HepG2 (cell line): ENCODE measurements at regions of chr4 and their contacts with region 1.

Region 1: DNA sequence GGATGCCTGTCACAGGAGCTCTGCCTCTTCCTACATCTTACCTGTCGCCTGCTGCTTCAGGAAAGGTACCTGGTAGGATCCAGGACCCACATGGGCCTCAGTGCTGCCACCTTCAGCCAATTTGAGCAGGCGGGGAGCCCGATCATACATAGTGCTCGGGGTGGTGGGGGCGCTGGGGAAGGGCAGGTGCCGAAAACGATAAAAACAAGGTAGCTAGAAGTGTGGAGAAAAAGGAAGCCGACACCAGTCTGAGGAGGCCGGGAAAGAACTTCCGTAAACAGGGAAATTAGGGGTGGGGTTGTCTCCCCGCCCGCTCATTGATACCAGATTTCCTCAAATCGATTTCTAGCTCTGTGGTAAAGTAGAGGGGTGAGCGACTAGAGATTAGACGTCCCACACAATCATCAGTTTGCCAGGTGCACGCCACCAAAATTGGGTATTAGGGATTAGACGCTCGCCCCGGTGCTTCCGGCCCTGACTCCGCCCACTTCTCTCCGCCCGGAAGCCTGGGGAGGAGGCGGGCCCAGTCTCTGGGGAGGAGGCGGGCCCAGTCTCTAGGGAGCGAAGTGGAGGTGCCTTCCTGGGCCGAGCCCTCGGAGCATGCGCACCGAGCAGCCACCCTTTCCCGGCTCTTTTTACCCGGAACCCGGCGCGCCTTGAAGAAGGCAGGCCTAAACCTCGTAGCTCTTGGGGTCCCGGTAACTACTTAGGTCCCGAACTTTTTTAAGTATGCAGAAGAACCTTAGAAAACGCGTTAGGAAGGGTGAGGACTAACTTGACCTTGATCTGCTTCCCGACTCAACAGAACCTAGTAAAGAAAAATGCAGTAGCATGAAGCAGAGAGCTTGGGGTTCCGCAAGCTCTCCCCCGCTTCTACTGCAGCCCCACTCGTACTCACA is at the start of gene STPG2:
- DNase-seq: peak; percentile 79
- ATAC-seq: peak; percentile 100
- H3K4me3 ChIP-seq: peak within 1 kb of the TSS; percentile 75 to 83 (median 76)
- H3K27ac ChIP-seq: peak within 1 kb of the TSS; percentile 35
- H3K4me1 ChIP-seq: peaks cover 13% of the 10 kb centered on the region
- H3K27me3 ChIP-seq: no peaks in the 10 kb centered on the region; a peak in 1 of 5 replicates
- CTCF ChIP-seq: peak; percentile 52
- EP300 ChIP-seq: no peak
- POLR2A ChIP-seq: peak in 1 of 2 experiments; percentile 30; a peak in 1 of 4 replicates
- RAD21 ChIP-seq: no peak
- total RNA-seq, gene STPG2: 0.07 TPM in 1 of 2 replicates, not detected in the other

Region 2: DNA sequence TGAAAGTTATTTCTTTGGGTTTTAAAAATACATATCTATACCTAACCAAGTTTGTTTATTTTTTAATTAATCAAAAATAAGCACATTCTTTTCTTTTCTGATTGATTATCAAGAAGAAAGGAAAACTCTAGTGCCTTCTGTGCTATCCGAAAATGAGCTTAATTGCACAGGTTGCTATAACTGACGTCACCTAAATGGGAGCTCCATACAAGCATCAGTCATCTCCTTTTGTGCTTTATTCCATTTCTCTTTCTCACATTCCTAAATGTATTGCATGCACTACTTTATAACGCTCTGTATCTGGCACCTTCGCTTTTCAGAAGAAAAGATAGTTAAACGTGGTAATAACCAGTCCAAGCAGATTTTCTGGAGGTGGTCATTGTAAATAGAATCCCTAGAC is 675.0 kb before region 1 on chr4:
- CTCF ChIA-PET with region 1: no interaction called
- POLR2A ChIA-PET with region 1: no interaction called
- in situ Hi-C with region 1: no loop called
- intact Hi-C with region 1: no loop called
- DNase-seq: no peak
- ATAC-seq: no peak
- H3K4me3 ChIP-seq: no peak overlapping the region
- H3K27ac ChIP-seq: no peak overlapping the region
- H3K4me1 ChIP-seq: no peaks in the 10 kb centered on the region
- H3K27me3 ChIP-seq: no peaks in the 10 kb centered on the region
- CTCF ChIP-seq: no peak
- EP300 ChIP-seq: no peak
- POLR2A ChIP-seq: no peak
- RAD21 ChIP-seq: no peak

Region 3: DNA sequence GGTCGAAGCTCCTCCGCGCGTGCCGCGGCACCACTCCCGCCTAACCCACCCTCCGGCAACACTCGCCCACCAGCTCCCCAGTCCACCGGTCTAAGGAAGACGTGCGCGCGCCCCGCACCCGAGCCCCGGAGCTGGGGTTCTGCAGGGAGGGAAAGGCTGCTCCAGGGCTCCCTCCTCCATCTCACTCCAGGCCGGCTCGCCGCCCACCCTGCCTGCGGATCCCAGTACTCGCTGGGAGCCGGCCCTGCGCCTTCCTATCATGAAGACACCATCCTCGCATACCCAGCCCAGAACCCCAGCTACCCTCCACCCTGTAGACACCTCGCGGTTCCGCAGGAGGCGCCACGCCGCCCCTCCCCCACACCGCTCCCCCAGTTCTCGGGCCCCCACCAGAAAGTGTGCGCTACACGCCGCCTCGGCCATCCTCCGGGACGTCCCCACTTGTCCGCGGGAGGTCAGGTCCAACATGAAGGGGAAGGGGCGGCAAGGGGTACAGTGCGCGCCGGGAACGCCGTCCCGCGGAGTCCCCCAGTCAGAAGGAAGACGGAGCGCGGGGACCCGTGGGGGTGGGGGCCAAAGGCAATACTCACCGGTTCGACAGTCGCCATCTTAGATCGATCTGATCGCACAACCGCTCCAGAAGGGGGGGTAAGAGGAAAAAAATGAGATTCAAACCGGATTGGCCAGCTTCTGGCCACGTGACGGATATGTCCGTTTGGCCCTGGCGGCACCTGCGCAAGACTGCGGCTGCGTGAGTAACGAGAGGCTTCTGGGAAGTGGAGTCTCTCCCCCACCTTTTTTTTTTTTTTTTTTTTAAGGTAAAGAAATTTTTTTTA is 785.5 kb after region 1 on chr4 and contains the start of gene EIF4E:
- CTCF ChIA-PET with region 1: no interaction called
- POLR2A ChIA-PET with region 1: no interaction called
- in situ Hi-C with region 1: no loop called
- intact Hi-C with region 1: loop called (anchors 1 kb)
- DNase-seq: peak; percentile 98
- ATAC-seq: peak; percentile 78
- H3K4me3 ChIP-seq: peak within 1 kb of the TSS; percentile 82 to 99 (median 93)
- H3K27ac ChIP-seq: peak within 1 kb of the TSS; percentile 95
- H3K4me1 ChIP-seq: peaks cover 30% of the 10 kb centered on the region
- H3K27me3 ChIP-seq: no peaks in the 10 kb centered on the region; a peak in 1 of 5 replicates
- CTCF ChIP-seq: peak; percentile 42
- EP300 ChIP-seq: 0 out of 4 replicates have a peak, but pooled peaks of 1 of the 2 experiments have one; percentile 39
- POLR2A ChIP-seq: peak; percentile 49 to 67; a peak in 3 of 4 replicates
- RAD21 ChIP-seq: no peak; the same call in 1 of the 2 replicates
- total RNA-seq, gene EIF4E: 194 and 288 TPM in 2 replicates

Region 4: DNA sequence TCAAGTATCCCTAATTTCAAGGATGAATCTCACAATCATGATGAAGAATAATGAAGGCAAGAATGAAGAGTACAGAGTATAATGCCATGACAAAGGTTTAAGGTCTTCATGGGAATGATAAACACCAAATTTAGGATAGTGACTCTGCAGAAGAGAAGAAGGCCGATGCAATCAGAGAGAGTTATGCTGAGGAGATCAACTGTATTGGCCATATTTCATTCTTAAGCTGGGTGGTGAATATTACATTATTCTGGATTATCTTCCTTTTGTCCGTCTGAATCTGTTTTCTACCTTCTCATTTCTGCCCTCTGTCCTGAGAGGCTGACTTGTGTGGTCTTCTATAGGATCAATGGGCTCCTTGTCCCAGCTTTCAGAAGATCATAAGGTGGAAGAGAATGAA is 844.5 kb after region 1 on chr4:
- CTCF ChIA-PET with region 1: no interaction called
- POLR2A ChIA-PET with region 1: no interaction called
- in situ Hi-C with region 1: no loop called
- intact Hi-C with region 1: no loop called
- DNase-seq: no peak
- ATAC-seq: no peak
- H3K4me3 ChIP-seq: no peak overlapping the region
- H3K27ac ChIP-seq: no peak overlapping the region
- H3K4me1 ChIP-seq: no peaks in the 10 kb centered on the region
- H3K27me3 ChIP-seq: no peaks in the 10 kb centered on the region; a peak in 1 of 5 replicates
- CTCF ChIP-seq: no peak
- EP300 ChIP-seq: no peak
- POLR2A ChIP-seq: no peak
- RAD21 ChIP-seq: no peak